Ovary (tissue), 10 donors: ENCODE measurements at regions of chr1 and their contacts with region 1.

Region 1: GRCh38 chr1:151070474-151071276 is at the start of gene GABPB2:
- DNase-seq: peak; percentile 94 to 96 (median 96)
- H3K4me3 ChIP-seq: peak within 1 kb of the TSS; percentile 83
- H3K27ac ChIP-seq: peak within 1 kb of the TSS; percentile 97 to 99
- H3K4me1 ChIP-seq: peaks cover 6% of the 10 kb centered on the region
- H3K27me3 ChIP-seq: no peaks in the 10 kb centered on the region
- CTCF ChIP-seq: peak; percentile 77 to 94 (median 86)
- EP300 ChIP-seq: no peak
- POLR2A ChIP-seq: peak; percentile 53
- total RNA-seq, gene GABPB2: 12.6 to 28.1 (median 24.2) TPM

Region 2: DNA sequence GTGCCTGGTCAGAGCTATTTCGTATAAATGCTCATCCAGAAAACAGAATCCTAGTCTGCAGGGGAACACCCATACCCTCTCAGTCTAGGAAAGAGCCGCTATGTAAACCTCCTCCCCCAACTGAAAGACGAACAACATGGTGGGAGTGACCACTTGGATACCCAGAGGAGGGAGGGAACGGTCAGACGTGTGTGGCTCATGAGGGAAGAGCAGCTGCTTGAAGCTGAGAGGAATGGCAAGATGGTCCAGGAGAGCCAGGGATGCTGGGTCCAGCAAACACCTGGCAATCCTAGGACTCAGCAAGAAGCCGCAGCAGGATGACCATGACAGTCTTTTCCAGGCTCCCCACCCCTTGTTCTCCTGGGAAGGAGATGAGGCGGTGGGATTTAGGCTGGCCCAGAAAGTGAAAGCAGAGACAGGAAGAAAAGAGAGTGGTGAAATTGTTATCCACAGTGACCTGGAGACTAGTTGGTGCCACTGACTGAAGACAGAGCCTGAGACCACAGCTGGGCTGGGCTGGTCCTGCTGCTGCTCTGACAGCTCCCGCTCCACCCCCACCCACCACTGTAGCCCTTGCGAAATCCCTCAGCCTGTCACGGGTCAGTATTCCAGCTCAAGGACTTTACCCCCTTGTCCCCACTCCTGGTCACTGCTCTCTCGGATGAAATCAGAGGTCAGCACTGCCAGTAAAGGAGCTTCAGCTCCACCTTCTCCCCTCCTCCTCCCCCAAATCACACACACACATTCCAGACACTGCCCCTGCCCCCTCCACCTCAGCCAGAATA is 99.7 kb before region 1 on chr1:
- intact Hi-C with region 1: no loop called
- DNase-seq: peak; percentile 72 to 90 (median 79)
- H3K4me3 ChIP-seq: no peak overlapping the region
- H3K27ac ChIP-seq: peak overlapping the region in 1 of 2 donors; percentile 74
- H3K4me1 ChIP-seq: peaks cover 27% of the 10 kb centered on the region
- H3K27me3 ChIP-seq: no peaks in the 10 kb centered on the region
- CTCF ChIP-seq: no peak
- EP300 ChIP-seq: no peak
- POLR2A ChIP-seq: no peak

Region 3: DNA sequence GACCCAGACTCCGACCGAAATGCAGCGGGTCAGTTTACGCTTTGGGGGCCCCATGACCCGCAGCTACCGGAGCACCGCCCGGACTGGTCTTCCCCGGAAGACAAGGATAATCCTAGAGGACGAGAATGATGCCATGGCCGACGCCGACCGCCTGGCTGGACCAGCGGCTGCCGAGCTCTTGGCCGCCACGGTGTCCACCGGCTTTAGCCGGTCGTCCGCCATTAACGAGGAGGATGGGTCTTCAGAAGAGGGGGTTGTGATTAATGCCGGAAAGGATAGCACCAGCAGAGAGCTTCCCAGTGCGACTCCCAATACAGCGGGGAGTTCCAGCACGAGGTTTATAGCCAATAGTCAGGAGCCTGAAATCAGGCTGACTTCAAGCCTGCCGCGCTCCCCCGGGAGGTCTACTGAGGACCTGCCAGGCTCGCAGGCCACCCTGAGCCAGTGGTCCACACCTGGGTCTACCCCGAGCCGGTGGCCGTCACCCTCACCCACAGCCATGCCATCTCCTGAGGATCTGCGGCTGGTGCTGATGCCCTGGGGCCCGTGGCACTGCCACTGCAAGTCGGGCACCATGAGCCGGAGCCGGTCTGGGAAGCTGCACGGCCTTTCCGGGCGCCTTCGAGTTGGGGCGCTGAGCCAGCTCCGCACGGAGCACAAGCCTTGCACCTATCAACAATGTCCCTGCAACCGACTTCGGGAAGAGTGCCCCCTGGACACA is 22.6 kb before region 1 on chr1:
- intact Hi-C with region 1: loop called in 1 of 4 experiments (anchors 2 kb)
- DNase-seq: peak; percentile 67 to 77 (median 71)
- H3K4me3 ChIP-seq: peak overlapping the region; percentile 81
- H3K27ac ChIP-seq: peak overlapping the region; percentile 66 to 89
- H3K4me1 ChIP-seq: no peaks in the 10 kb centered on the region
- H3K27me3 ChIP-seq: no peaks in the 10 kb centered on the region
- CTCF ChIP-seq: peak in 2 of 3 donors; percentile 42 to 46
- EP300 ChIP-seq: no peak
- POLR2A ChIP-seq: no peak

Region 4: DNA sequence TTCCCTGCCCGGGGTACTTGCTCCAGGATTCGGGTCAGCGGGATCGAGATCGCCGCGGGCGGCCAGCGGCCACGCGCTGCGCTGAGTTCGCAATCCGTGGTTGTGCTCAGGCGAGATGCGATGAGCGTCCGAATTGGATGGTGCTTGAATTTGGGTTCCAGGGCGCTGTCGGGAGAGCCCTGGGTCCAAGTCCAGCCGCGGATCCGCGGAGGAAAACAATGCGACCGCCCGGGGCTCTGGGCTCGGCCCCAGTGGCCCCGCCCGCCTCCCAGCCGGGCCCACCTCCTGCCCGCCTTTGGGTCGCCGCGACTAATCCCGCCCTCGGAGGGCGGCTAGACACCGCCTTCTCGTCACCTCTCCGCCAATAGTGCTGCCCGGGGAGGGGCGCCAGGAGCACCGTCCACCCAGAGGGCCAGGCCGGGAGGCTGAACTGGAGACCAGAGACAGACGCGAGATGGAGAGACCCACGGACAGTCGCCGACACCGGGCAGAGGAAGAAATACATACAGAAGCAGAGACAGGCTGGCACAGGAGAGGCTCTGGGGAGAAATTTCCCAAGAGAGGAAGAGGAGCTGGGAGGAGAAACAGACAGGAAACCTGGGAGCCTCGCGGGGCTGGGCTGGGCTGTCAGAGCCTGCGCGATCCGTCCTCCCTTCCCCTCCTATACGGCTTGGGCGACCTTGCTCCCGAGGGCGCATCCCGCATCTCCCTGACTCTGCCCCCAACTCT is 75.9 kb after region 1 on chr1 and contains the start of gene SEMA6C:
- intact Hi-C with region 1: loop called in 2 of 4 experiments (anchors 5 to 10 kb)
- DNase-seq: peak; percentile 94 to 96 (median 95)
- H3K4me3 ChIP-seq: peak within 1 kb of the TSS; percentile 45
- H3K27ac ChIP-seq: peak within 1 kb of the TSS; percentile 41 to 77
- H3K4me1 ChIP-seq: peaks cover 8% of the 10 kb centered on the region
- H3K27me3 ChIP-seq: no peaks in the 10 kb centered on the region
- CTCF ChIP-seq: no peak
- EP300 ChIP-seq: no peak
- POLR2A ChIP-seq: peak; percentile 72
- total RNA-seq, gene SEMA6C: 8.0 to 18.0 (median 14.7) TPM

Region 5: DNA sequence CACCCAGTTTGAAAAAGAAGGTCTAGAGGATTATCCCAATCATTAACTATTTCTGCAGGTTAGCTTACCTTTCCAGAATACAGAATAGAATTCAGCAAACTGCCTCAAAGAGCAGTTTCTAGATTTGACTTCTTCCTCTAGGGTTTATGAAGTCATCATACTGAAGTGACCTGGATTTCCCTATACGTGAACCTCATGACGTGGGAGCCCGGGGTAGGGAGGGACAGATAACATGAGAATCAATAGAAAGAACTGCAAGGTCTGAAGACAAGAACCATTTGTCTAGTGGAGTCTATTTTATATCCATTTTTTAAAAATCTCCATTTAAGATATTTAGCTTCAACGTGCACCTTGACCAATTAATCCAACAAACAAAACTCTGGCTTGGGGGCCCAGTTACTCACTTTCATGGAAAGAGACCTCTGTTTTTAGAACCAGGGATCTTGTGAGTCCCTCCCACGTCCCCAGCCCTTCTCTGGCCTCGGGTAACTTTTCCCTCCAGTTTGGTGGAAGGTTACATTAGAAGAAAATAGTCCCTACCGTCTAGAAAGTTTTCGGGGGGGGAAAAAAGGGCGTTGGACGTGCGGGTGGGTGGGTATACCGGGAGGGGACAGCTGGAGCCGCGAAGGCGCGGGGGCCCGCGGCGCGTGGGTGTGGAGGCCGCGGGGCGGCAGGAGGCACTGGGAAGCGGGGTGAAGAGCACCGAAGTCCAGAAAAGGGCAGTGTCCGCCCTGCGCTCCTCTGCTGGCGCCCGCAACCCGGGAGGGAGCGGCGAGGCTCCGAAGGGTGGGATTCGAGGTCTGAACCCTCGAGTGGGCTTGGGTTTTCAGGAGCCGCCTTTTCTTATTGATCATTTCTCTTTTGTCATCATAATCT is 402.4 kb after region 1 on chr1:
- intact Hi-C with region 1: no loop called
- DNase-seq: peak; percentile 56 to 73 (median 64)
- H3K4me3 ChIP-seq: peak overlapping the region; percentile 74
- H3K27ac ChIP-seq: peak overlapping the region in 1 of 2 donors; percentile 27
- H3K4me1 ChIP-seq: no peaks in the 10 kb centered on the region
- H3K27me3 ChIP-seq: no peaks in the 10 kb centered on the region
- CTCF ChIP-seq: no peak
- EP300 ChIP-seq: no peak
- POLR2A ChIP-seq: no peak